Calu3 (cell line): ENCODE measurements at regions of chr7 and their contacts with region 1.

Region 1: GRCh38 chr7:158495786-158496185 is 91.8 kb downstream of the PTPRN2 start:
- DNase-seq: peak; percentile 65
- H3K4me3 Mint-ChIP-seq: no peak overlapping the region
- H3K27ac Mint-ChIP-seq: no peak overlapping the region
- H3K4me1 Mint-ChIP-seq: no peaks in the 10 kb centered on the region
- H3K27me3 Mint-ChIP-seq: no peaks in the 10 kb centered on the region
- CTCF ChIP-seq: no peak

Region 2: GRCh38 chr7:158646766-158647447 is 151.1 kb after region 1 on chr7:
- CTCF ChIA-PET with region 1: interaction called, 3 read pairs
- intact Hi-C with region 1: loop called (anchors 10 kb)
- DNase-seq: peak; percentile 34
- H3K4me3 Mint-ChIP-seq: no peak overlapping the region
- H3K27ac Mint-ChIP-seq: no peak overlapping the region
- H3K4me1 Mint-ChIP-seq: peaks cover 8% of the 10 kb centered on the region
- H3K27me3 Mint-ChIP-seq: no peaks in the 10 kb centered on the region
- CTCF ChIP-seq: peak; percentile 67

Region 3: DNA sequence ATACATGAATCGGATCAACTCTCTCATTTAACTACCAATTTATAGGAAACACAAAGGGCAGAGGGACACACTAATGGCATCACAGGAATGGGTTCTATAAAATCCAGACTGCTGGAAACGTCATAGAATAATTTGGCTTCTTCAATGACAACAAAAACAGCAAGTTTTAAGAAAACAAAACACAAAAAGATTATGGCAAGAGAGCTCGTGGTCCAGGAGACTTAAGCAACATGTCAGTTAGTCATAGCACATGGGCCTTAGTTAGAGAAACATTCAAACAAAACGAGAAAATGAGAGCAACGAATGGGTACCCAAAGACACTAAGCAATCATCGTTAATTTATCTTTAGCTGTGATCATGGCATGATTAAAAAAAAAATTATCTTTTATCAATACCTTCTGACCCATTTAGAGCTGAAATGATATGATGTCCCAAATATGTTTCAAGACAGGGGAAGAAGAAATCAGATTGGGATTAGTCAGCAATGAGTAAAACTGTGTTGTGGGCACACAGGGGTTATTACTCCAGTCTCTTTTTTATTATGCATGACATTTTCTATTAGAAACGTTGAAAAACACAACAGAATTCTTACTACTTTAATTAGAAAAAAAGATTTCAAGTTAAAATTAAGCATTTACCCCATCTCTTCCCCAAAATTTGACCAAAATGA is 180.5 kb after region 1 on chr7:
- CTCF ChIA-PET with region 1: no interaction called
- intact Hi-C with region 1: no loop called
- DNase-seq: no peak
- H3K4me3 Mint-ChIP-seq: no peak overlapping the region
- H3K27ac Mint-ChIP-seq: no peak overlapping the region
- H3K4me1 Mint-ChIP-seq: peaks cover 8% of the 10 kb centered on the region
- H3K27me3 Mint-ChIP-seq: no peaks in the 10 kb centered on the region
- CTCF ChIP-seq: no peak